Breast epithelium (tissue), 4 donors: ENCODE measurements at regions of chr10 and their contacts with region 1.

Region 1: GRCh38 chr10:118046395-118047156 is at the start of gene RAB11FIP2:
- DNase-seq: peak; percentile 92 to 95
- H3K4me3 ChIP-seq: peak within 1 kb of the TSS; percentile 90 to 92 (median 92)
- H3K27ac ChIP-seq: peak within 1 kb of the TSS; percentile 89 to 94
- H3K4me1 ChIP-seq: no peaks in the 10 kb centered on the region
- H3K27me3 ChIP-seq: no peaks in the 10 kb centered on the region
- CTCF ChIP-seq: no peak
- POLR2A ChIP-seq: no peak
- total RNA-seq, gene RAB11FIP2: 26.5 to 36.4 (median 26.7) TPM

Region 2: GRCh38 chr10:116627386-116627933 is 1419.1 kb before region 1 on chr10:
- intact Hi-C with region 1: loop called (anchors 5 kb)
- DNase-seq: no peak
- H3K4me3 ChIP-seq: peak overlapping the region in 2 of 3 donors; percentile 35 to 63
- H3K27ac ChIP-seq: no peak overlapping the region
- H3K4me1 ChIP-seq: no peaks in the 10 kb centered on the region
- H3K27me3 ChIP-seq: peaks cover 0 to 17% of the 10 kb centered on the region in 2 donors
- CTCF ChIP-seq: peak in 2 of 3 donors; percentile 38 to 59
- POLR2A ChIP-seq: no peak

Region 3: GRCh38 chr10:117137031-117137910 is 909.3 kb before region 1 on chr10:
- intact Hi-C with region 1: no loop called
- DNase-seq: no peak
- H3K4me3 ChIP-seq: peak overlapping the region; percentile 37 to 65 (median 37)
- H3K27ac ChIP-seq: no peak overlapping the region
- H3K4me1 ChIP-seq: peaks cover 5 to 15% of the 10 kb centered on the region in 2 donors
- H3K27me3 ChIP-seq: peaks cover 12 to 97% of the 10 kb centered on the region in 2 donors
- CTCF ChIP-seq: no peak
- POLR2A ChIP-seq: no peak